ENCODE measurements at regions of chr6 and their contacts with region 1.

Region 1: DNA sequence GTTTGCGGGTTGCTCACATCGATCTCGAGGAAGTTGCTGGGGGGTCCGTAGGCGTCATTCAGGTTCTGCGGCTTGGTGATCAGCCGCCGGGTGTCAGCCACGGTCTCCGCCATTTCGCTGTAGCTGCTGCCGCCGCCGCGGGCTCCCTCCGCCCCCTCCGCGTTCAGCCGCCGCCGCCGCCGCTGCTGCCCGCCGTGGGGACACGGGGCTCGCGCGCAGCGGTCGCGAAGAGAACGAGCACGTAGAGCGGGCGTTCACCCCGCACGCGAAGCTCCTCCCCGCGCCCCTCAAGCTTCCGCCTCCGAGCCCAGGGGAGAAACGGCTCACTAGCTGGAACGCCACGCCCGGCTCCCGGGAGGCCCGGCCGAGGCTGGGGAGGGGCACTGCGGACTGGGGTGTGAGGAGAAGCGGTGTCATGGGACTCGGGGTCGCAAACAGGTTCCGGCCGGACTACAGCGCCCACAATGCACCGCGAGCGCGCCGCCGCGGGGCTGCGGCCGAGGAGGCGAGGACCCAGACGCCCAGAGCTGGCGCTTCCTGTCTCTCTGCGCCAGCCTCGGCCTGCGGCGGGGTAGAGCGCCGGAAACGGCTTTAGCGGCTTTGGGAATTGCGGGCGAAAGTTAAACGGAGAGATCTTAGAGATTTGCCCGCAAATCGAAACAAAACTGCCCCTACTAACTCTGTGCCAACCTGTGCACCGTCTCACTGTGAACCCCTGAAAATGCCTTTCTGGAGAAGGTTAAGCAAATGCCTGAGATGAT is at the start of gene SNX3:
- DNase-seq: peak; percentile 96 to 97
- ATAC-seq: peak; percentile 93 to 95
- H3K4me3 ChIP-seq: peak within 1 kb of the TSS; percentile 68 to 97 (median 90)
- H3K27ac ChIP-seq: peak within 1 kb of the TSS; percentile 96 to 99 (median 98)
- H3K4me1 ChIP-seq: peaks cover 30 to 31% of the 10 kb centered on the region in 2 donors
- H3K27me3 ChIP-seq: no peaks in the 10 kb centered on the region
- CTCF ChIP-seq: peak in 2 of 5 experiments; percentile 25 to 26
- POLR2A ChIP-seq: peak; percentile 88 to 94
- total RNA-seq, gene SNX3: 150 to 177 (median 168) TPM

Region 2: DNA sequence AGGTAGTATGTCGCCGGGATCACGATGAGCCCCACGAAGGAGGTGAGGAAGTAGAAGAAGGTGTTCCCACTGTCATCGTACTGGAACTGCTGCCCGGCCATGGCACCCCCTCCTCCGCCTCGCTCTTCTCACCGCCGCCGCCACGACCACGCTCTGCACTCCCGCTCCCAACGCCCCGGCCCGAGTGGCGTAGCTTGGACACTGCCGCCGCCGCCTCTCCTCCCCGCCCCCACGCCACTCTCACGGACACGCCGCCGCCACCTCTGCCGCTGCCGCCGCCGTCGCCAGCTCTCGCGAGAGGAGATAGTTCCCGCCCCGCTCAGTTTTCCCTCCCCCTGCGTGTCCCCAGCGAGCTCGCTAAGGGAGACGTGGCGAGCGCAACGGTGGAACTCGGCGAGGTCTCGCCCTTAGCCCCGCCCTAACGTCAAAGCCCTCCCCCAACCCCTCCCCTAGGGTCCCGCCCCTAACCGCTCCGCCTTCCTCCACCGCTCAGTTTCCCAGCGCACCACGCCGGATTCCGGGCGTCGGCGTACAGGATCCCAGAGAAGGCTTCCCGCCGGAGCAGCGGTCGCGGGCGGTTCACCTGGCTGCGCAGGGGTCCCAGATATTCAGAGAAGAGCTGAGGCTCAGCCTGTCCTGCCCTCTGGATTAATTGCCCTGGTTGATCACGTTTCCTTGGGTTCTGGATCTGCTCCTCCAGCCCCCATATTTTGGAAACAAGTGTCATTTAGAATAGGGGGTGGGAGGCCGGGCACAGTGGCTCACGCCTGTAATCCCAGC is 302.9 kb before region 1 on chr6 and contains the start of gene SEC63:
- in situ Hi-C with region 1: no loop called
- intact Hi-C with region 1: loop called (anchors 10 kb)
- DNase-seq: peak; percentile 96 to 97
- ATAC-seq: peak; percentile 96
- H3K4me3 ChIP-seq: peak within 1 kb of the TSS; percentile 68 to 95 (median 73)
- H3K27ac ChIP-seq: peak within 1 kb of the TSS; percentile 82 to 94 (median 86)
- H3K4me1 ChIP-seq: peaks cover 17 to 24% of the 10 kb centered on the region in 2 donors
- H3K27me3 ChIP-seq: no peaks in the 10 kb centered on the region
- CTCF ChIP-seq: peak in 2 of 5 experiments; percentile 5 to 6
- POLR2A ChIP-seq: peak; percentile 91
- total RNA-seq, gene SEC63: 10.1 to 23.1 (median 11.2) TPM

Region 3: GRCh38 chr6:108133594-108134179 is 127.3 kb before region 1 on chr6:
- in situ Hi-C with region 1: no loop called
- intact Hi-C with region 1: loop called (anchors 5 kb)
- DNase-seq: peak in 1 of 2 donors; percentile 20
- ATAC-seq: peak; percentile 56 to 79
- H3K4me3 ChIP-seq: peak overlapping the region; percentile 39 to 65 (median 50)
- H3K27ac ChIP-seq: peak overlapping the region; percentile 39 to 63 (median 50)
- H3K4me1 ChIP-seq: peaks cover 5 to 12% of the 10 kb centered on the region in 2 donors
- H3K27me3 ChIP-seq: peaks cover 0 to 13% (median 0%) of the 10 kb centered on the region in 3 donors
- CTCF ChIP-seq: no peak
- POLR2A ChIP-seq: no peak

Region 4: DNA sequence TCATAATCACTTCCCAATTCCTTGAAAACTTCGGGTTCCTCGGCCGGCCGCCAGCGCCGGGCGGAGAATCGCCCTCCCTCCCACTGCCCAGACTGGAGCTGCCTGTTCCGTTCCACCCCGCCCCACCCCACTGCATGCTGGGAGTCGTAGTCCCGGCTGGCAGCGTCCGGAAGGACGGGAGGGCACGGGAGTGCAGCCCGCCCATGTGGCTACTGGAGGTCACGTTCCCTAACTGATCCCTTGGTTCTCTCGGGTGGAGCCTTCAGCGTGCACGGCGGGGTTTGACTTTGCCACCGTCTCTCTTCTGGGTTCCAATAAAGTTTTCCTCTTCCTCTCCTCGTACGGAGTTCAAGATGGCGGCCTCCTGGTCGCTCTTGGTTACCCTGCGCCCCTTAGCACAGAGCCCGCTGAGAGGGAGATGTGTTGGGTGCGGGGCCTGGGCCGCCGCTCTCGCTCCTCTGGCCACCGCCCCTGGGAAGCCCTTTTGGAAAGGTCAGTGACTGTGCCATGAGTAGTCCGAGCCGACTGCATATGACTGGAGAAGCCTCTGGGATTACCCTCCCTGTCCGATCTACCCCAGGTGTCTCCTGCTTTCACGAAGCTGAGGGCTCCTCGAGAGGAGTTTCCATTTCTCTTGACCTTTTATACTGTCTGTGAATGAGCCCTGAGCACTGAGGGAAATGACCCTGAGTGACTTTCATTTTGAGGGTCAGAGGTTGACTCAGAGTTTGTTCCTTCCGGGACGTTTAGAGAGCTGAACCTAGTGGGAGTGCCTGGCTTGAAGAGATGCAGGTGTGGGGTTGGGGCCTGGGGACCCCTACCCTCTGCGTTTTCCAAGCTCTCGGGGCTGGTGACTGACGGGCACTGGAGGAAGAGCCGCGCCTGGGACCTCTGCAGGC is 34.0 kb after region 1 on chr6 and contains the start of gene AFG1L:
- in situ Hi-C with region 1: no loop called
- intact Hi-C with region 1: loop called (anchors 1 kb)
- DNase-seq: peak; percentile 92
- ATAC-seq: peak; percentile 95 to 97
- H3K4me3 ChIP-seq: peak within 1 kb of the TSS; percentile 79 to 91 (median 82)
- H3K27ac ChIP-seq: peak within 1 kb of the TSS; percentile 88 to 96 (median 92)
- H3K4me1 ChIP-seq: peaks cover 19% of the 10 kb centered on the region in 2 donors
- H3K27me3 ChIP-seq: no peaks in the 10 kb centered on the region
- CTCF ChIP-seq: no peak
- POLR2A ChIP-seq: peak; percentile 65 to 68
- total RNA-seq, gene AFG1L: 2.1 to 7.0 (median 2.6) TPM

Region 5: DNA sequence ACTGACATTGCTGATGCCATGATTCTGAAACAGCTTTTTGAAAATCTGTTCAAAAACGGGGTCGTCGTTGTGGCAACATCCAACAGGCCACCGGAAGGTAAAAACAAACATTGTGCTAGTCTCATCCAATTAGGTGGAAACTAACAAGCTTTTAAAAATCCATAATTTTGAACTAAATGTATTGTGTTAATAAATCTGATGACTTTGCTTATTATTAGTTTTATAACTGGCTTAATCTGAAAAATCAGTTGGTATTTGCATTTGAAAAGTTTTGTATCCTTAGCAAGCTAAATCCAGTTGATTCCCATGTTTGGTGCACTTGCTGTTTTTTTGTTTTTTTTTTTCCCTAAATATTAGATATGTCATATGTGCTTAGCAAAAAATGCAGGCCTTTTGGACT is 105.2 kb after region 1 on chr6:
- in situ Hi-C with region 1: no loop called
- intact Hi-C with region 1: loop called (anchors 2 kb)
- DNase-seq: no peak
- ATAC-seq: no peak
- H3K4me3 ChIP-seq: no peak overlapping the region
- H3K27ac ChIP-seq: peak overlapping the region; percentile 66 to 79 (median 73)
- H3K4me1 ChIP-seq: peaks cover 11 to 14% of the 10 kb centered on the region in 2 donors
- H3K27me3 ChIP-seq: no peaks in the 10 kb centered on the region
- CTCF ChIP-seq: no peak
- POLR2A ChIP-seq: no peak

Region 6: DNA sequence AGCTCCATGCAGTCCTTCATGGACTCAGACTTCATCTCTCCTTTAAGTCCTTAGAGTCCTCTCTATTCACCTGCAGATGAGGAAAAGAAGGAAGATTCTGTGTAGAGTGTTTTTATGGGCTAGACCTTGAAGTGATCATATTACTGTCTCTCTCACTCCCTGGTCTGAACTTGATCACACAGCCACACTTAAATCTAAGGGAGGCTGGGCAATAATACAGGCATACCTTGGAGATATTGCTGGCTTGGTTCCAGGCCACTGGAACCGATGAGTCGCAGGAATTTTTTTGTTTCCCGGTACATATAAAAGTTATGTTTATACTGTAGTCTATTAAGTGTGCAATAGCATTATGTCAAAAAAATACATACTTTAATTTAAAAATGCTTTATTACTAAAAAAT is 240.6 kb after region 1 on chr6:
- in situ Hi-C with region 1: no loop called
- intact Hi-C with region 1: no loop called
- DNase-seq: no peak
- ATAC-seq: no peak
- H3K4me3 ChIP-seq: no peak overlapping the region
- H3K27ac ChIP-seq: no peak overlapping the region
- H3K4me1 ChIP-seq: no peaks in the 10 kb centered on the region
- H3K27me3 ChIP-seq: no peaks in the 10 kb centered on the region
- CTCF ChIP-seq: no peak
- POLR2A ChIP-seq: no peak

Measured in gastrocnemius medialis (tissue), 4 donors.